ENCODE measurements at regions of chr10 and their contacts with region 1.

Region 1: GRCh38 chr10:104309976-104310674 is 28.1 kb downstream of the ITPRIP start:
- DNase-seq: peak; percentile 87 to 91
- ATAC-seq: peak; percentile 90 to 92
- H3K4me3 ChIP-seq: no peak overlapping the region
- H3K27ac ChIP-seq: peak overlapping the region; percentile 82 to 87 (median 86)
- H3K4me1 ChIP-seq: peaks cover 35 to 54% of the 10 kb centered on the region in 2 donors
- H3K27me3 ChIP-seq: no peaks in the 10 kb centered on the region
- CTCF ChIP-seq: no peak
- POLR2A ChIP-seq: peak in 1 of 2 donors; percentile 30

Region 2: DNA sequence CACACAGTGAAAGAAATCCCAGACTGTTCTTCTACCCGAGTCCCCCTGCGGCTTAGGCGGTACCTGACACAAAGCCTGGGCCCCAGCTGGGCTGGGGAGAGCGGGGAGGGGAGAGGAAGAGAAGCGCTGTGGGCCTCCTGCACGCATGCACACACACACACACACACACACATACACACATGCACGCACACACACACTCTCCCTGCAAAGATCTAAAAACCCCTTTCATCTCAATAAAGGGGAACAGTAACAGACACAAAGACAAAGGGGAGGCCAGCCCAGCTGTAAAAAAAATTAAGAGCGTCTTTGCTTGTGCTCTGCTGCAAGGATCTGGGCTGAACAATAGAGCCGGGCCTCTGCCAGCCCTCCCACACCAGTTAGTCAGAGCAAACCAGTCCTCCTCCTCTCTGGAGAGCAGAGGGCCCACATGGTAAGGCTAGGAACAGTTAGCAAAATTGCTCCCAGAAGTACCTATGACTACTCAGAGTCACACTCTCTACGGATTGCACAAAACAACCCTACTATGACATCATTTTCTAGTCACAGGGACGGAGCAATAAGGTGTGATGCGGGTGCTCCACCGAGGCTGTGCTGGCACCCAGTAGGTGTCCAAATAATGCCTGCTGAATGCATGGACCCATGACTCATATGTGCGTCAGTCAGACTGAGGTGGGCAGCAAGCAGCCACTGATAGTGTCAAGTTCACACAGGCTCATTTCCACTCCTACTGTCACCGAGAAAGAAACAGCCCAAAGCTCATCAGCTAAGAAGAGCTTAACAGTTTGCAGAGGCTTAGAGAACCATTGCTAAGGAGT is 19.0 kb after region 1 on chr10:
- in situ Hi-C with region 1: no loop called
- intact Hi-C with region 1: loop called (anchors 1 kb)
- DNase-seq: peak; percentile 42 to 81
- ATAC-seq: peak; percentile 73 to 78
- H3K4me3 ChIP-seq: peak overlapping the region in 3 of 4 donors; percentile 12 to 26 (median 19)
- H3K27ac ChIP-seq: peak overlapping the region; percentile 82 to 97 (median 92)
- H3K4me1 ChIP-seq: peaks cover 74 to 81% of the 10 kb centered on the region in 2 donors
- H3K27me3 ChIP-seq: no peaks in the 10 kb centered on the region
- CTCF ChIP-seq: no peak
- POLR2A ChIP-seq: peak; percentile 27 to 42

Measured in gastrocnemius medialis (tissue), 4 donors.